GM10248 (cell line): ENCODE measurements at regions of chr10 and their contacts with region 1.

Region 1: GRCh38 chr10:91251430-91252056 is 31.1 kb downstream of the PCGF5 start:
- DNase-seq: peak; percentile 31
- CTCF ChIP-seq: peak; percentile 75

Region 2: DNA sequence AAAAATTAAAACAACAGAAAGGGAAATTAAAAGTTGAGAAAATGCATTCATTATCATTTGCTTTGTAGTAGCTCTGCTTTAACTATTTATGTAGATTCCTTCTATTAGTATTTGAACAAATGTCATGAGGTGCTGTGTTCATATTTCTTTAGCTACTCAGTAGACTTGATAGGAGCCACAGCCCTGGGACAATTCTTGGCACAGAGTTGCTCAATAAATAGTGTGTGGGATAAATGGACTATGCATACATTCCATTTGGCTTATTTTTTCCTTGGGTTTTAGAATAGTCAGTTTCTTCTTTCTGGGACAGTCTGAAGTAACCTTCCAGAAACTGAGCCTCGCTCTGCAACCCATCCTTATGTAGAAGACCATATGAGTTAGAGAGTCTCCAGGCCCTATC is 366.4 kb before region 1 on chr10:
- CTCF ChIA-PET with region 1: interaction called, 24 read pairs
- POLR2A ChIA-PET with region 1: no interaction called
- DNase-seq: no peak
- CTCF ChIP-seq: no peak

Region 3: DNA sequence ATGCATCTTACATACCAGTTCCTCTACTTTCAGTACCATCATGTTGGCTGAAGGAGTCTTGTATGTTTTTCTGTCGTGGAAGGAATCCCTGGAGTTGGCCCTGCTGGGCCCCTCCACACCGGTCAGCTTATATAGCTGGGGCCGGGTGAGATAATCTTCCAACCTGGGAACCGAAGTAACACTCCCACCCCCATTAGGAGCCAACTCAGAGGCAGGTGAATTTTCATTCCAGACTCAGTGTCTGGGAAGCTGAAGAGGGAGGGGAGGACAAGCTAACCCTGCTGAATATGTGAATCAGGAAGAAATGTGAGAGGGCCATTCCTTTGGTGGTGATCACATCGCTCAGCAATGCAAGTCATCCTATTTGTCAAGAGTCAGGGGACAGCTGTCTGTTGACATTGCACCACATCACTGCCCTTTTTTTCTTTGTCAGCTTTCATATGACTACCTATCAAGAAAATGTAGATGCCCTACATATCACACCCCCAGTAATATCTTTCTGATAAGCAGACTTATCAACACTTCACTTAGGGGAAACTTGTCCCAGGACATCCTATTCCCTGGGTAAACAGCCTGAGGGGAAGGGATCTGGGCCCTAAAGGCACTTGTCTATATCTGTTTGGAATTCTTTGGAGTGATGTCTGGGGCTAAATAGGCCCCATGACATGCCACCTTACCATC is 330.4 kb before region 1 on chr10 and contains the start of gene ANKRD1:
- CTCF ChIA-PET with region 1: interaction called, 39 read pairs
- POLR2A ChIA-PET with region 1: no interaction called
- DNase-seq: no peak
- CTCF ChIP-seq: no peak

Region 4: GRCh38 chr10:91006001-91006751 is 245.4 kb before region 1 on chr10:
- CTCF ChIA-PET with region 1: interaction called, 59 read pairs
- POLR2A ChIA-PET with region 1: no interaction called
- DNase-seq: peak; percentile 28
- CTCF ChIP-seq: peak; percentile 67

Region 5: DNA sequence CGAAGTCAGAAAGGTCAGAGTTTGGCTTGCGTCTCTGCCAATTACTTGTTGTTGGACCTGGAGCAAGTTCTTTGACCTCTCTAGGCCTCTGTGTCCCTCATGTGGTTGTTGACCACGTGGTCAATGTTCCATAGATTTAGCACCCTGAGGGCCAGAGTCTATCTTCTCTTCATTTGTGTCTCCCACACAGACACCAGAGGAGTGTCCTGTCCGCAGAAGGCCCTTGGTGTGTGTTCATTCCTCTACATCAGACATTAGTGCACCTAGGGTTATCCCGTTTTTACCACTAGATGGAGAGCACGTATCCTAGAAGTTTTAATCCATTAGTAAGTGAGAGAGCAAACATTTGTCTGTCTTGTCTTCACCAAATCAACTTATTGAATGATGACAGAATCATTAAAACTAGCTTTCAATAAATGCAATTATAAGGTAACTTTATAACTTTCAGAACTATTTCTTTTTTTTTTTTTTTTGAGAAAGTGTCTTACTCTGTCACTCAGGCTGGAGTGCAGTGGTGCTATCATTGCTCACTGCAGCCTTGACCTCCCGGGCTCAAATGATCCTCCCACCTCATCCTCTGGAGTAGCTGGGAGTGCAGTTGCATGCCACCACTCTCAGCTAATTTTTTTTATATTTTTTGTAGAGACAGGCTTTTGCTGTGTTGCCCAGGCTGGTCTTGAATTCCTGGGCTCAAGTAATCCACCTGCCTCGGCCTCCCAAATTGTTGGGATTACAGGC is 208.2 kb before region 1 on chr10:
- CTCF ChIA-PET with region 1: interaction called, 18 read pairs
- POLR2A ChIA-PET with region 1: no interaction called
- DNase-seq: no peak
- CTCF ChIP-seq: peak; percentile 15

Region 6: DNA sequence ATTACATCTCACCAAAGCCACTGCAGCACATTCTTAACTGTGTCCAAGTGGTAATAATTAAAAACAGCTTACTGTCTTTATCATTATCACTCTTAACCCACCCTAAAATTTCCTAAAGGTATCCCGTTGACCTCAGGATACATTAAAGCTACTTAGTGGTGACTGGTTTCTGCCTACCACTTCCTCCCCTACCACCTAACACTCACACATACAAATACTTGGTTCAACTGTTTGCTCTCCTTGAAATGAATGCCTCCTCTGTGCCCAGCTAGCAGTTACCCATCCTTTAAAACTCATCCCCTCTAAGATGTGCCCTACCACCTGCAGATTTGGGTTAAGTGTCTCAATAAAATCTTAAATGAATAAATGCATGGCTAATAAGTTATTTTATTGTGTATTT is 24.0 kb before region 1 on chr10:
- CTCF ChIA-PET with region 1: interaction called, 26 read pairs
- POLR2A ChIA-PET with region 1: no interaction called
- DNase-seq: no peak
- CTCF ChIP-seq: no peak

Region 7: GRCh38 chr10:92124616-92125143 is 873.1 kb after region 1 on chr10:
- CTCF ChIA-PET with region 1: no interaction called
- POLR2A ChIA-PET with region 1: no interaction called
- DNase-seq: no peak
- CTCF ChIP-seq: no peak